Activated CD4-positive, alpha-beta T cell treated with anti-CD3 and anti-CD28 coated beads, Interleukin-2, amount 10 ng/mL, durations not matched to agents 7 days and 5 days (primary cell): ENCODE measurements at regions of chr19 and their contacts with region 1.

Region 1: DNA sequence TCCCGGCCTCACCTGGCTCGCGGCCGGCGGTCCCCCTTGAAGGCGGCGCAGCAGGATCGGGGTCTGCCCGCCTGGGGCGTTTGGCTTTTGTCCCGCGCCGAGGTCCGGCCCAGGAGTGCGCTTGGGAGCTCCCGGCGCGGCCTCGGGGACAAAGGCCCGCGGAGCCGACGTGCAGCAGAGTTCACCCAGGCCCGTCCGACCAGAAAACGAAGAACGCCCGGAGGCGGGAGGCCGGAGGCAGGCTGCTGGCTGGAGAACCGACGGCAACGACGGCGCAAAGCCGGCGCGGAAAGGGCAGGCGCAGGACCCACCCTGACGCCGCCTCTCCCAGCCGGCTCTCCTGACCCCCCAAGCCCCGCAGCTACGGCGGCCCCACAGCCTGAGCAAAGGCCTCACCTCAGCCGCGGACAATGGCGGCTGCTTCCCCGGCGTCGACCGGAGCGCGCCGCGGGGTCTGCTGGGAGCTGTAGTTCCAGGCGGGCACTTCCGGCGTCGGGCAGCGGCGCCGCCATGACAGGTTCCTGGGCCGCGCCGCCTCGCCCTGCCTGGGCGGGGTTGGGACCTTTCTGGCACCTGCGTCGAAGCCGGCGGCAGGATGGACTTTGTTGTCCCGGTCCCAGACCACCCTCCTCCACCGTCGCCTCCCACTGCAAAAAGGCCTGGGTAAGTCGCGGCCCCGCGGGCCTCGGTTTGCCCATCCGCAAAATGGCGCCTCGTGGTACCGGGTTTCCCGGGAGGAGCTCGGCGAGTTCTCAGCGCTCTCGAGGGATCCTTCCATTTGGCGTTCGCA is at the start of gene ZNF606:
- DNase-seq: peak; percentile 86
- H3K4me3 Mint-ChIP-seq: peak within 1 kb of the TSS; percentile 80
- H3K27ac Mint-ChIP-seq: peak within 1 kb of the TSS; percentile 93
- H3K4me1 Mint-ChIP-seq: peaks cover 31% of the 10 kb centered on the region
- H3K27me3 Mint-ChIP-seq: no peaks in the 10 kb centered on the region
- total RNA-seq, gene ZNF606: 11.1 to 15.3 TPM

Region 2: DNA sequence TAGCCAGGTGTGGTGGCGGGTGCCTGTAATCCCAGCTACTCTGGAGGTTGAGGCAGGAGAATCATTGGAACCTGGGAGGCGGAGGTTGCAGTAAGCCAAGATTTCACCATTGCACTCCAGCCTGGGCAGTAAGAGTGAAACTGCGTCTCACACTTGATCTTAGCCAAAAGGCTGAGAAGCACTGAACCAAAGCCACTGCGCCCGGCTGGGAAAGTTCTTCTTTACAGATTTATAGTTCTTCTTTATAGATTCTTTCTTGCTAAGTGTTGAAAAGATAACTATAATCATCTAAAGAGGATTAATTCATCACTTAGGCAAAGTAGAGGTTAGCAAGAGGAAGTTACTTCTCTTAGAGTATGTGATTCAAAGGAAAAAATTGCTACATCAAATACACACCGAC is 97.3 kb before region 1 on chr19:
- CTCF ChIA-PET with region 1: no interaction called
- POLR2A ChIA-PET with region 1: no interaction called
- DNase-seq: no peak
- H3K4me3 Mint-ChIP-seq: no peak overlapping the region
- H3K27ac Mint-ChIP-seq: no peak overlapping the region
- H3K4me1 Mint-ChIP-seq: peaks cover 2% of the 10 kb centered on the region
- H3K27me3 Mint-ChIP-seq: no peaks in the 10 kb centered on the region

Region 3: GRCh38 chr19:57947208-57948134 is 55.1 kb before region 1 on chr19 and contains the start of gene ZNF256:
- CTCF ChIA-PET with region 1: no interaction called
- POLR2A ChIA-PET with region 1: no interaction called
- DNase-seq: peak; percentile 93
- H3K4me3 Mint-ChIP-seq: peak within 1 kb of the TSS; percentile 94
- H3K27ac Mint-ChIP-seq: peak within 1 kb of the TSS; percentile 94
- H3K4me1 Mint-ChIP-seq: peaks cover 17% of the 10 kb centered on the region
- H3K27me3 Mint-ChIP-seq: no peaks in the 10 kb centered on the region
- total RNA-seq, gene ZNF256: 9.1 to 9.3 TPM

Region 4: GRCh38 chr19:57978586-57979289 is 23.8 kb before region 1 on chr19:
- CTCF ChIA-PET with region 1: interaction called, 20 read pairs
- POLR2A ChIA-PET with region 1: no interaction called
- DNase-seq: no peak
- H3K4me3 Mint-ChIP-seq: no peak overlapping the region
- H3K27ac Mint-ChIP-seq: no peak overlapping the region
- H3K4me1 Mint-ChIP-seq: no peaks in the 10 kb centered on the region
- H3K27me3 Mint-ChIP-seq: no peaks in the 10 kb centered on the region

Region 5: DNA sequence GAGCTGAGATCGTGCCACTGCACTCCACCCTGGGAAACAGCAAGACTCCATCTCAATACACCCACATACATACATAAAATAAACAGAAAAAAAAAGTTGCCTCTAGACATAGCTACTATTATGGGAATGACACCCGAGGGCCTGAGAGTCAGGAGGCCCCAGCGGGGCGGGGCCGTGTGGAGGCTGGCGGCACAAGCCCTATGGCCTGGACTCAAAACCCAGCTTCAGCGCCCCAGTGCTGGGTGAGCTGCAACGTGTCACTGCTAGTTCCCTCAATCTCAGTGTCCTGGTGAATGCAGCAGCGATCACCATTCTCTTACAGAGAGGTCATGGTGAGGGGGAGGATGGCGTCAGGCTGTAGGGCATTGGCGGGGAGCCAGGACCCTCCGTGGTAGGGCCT is 22.1 kb after region 1 on chr19:
- CTCF ChIA-PET with region 1: no interaction called
- POLR2A ChIA-PET with region 1: no interaction called
- DNase-seq: no peak
- H3K4me3 Mint-ChIP-seq: no peak overlapping the region
- H3K27ac Mint-ChIP-seq: no peak overlapping the region
- H3K4me1 Mint-ChIP-seq: no peaks in the 10 kb centered on the region
- H3K27me3 Mint-ChIP-seq: no peaks in the 10 kb centered on the region

Region 6: DNA sequence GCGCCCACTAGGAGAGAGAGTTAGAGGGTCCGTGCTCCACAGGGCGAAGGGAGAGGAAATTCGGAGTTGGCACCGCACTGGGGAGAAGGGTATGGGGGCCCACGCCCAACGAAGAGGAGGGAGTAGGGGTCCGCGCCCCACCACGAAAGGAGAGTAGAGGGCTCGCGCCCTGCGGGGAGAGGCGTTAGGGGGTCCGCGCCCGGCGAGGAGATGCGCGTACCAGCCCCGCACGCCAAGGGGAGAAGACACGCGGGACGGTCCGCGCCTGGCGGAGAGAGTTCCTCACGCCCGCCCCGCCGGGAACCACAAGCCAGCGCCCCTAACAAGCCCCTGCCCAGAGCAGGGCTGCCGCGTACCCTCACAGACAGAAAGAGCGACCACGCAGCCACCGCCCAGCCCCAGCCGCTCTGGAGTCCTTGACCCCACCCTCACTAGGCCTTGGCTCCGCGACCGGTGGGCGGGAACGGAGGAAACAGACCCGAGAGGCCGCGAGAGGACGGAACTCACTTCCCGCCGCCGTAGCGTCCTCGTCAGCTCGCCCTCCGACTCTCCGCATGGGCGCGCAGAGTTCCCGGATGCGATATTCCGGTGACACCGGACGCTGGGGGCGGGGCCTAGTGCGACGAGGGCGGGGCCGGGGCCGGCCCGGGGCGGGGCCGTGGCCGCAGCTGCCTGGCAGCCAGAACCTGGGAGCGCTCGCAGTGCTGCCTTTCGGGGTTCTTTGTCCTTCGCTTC is 115.4 kb after region 1 on chr19:
- CTCF ChIA-PET with region 1: no interaction called
- POLR2A ChIA-PET with region 1: no interaction called
- DNase-seq: no peak
- H3K4me3 Mint-ChIP-seq: no peak overlapping the region
- H3K27ac Mint-ChIP-seq: no peak overlapping the region
- H3K4me1 Mint-ChIP-seq: no peaks in the 10 kb centered on the region
- H3K27me3 Mint-ChIP-seq: no peaks in the 10 kb centered on the region